Psoas muscle (tissue), 8 donors: ENCODE measurements at regions of chr12 and their contacts with region 1.

Region 1: DNA sequence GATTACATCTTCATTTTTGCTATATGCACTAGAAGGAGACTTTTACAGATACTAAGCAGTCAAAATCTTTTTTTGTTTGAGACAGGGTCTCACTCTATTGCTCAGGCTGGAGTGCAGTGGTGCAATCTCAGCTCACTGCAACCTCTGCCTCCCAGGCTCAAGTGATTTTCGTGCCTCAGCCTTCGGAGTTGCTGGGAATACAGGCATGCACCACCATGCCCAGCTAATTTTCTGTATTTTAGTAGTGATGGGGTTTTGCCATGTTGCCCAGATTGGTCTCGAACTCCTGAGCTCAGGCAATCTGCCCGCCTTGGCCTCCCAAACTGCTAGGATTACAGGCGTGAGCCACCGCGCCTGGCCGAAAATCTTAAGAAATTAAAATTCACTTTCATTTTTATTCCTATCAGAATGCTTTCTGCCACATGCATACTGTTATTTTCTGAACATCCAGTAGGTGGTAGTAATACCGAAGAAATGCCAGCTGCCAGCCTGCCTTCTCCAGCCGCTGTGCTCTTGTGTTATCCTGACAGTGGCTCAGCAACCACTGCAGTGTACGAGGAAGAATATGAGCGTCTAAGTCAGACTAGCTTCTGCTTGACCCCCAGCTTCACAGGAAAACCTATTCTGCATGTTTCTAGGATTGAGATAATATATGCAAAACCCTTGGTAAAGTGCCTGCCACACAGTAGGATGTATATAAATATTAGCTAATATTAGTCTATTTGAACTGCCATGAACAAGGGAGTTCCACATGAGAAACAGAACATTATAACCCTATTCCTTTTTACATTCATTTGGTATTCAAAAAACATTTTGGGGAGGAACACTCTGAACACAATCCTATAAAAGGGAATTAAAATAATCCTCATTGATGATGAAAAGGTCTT is 54.2 kb downstream of the RPAP3 start:
- DNase-seq: peak; percentile 30 to 62
- ATAC-seq: peak; percentile 77 to 92 (median 85)
- H3K4me3 ChIP-seq: peak overlapping the region; percentile 33
- H3K27ac ChIP-seq: no peak overlapping the region
- H3K4me1 ChIP-seq: peaks cover 5% of the 10 kb centered on the region
- H3K27me3 ChIP-seq: no peaks in the 10 kb centered on the region
- CTCF ChIP-seq: peak; percentile 74

Region 2: DNA sequence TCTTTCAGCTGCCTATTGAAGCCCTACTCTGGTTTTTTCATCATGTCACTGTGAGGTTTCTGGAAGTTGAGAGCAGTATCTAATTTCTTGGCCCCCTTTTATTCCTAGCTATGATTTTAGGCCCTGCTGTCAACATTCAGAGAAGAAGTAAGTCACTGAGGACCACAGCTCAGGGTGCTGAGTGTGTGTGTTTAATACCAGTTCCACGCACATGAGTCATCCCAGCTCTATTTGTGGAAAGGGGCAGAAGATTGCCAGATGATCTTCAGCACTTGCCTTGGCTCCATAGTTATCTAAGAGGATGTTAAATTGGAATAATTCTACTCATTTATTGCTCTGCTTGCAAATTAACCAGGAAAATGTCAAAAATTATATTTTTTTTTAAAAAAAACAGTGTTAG is 760.3 kb before region 1 on chr12:
- intact Hi-C with region 1: no loop called
- DNase-seq: no peak
- ATAC-seq: peak; percentile 80 to 91 (median 88)
- H3K4me3 ChIP-seq: no peak overlapping the region
- H3K27ac ChIP-seq: peak overlapping the region; percentile 77
- H3K4me1 ChIP-seq: peaks cover 8% of the 10 kb centered on the region
- H3K27me3 ChIP-seq: no peaks in the 10 kb centered on the region
- CTCF ChIP-seq: no peak

Region 3: DNA sequence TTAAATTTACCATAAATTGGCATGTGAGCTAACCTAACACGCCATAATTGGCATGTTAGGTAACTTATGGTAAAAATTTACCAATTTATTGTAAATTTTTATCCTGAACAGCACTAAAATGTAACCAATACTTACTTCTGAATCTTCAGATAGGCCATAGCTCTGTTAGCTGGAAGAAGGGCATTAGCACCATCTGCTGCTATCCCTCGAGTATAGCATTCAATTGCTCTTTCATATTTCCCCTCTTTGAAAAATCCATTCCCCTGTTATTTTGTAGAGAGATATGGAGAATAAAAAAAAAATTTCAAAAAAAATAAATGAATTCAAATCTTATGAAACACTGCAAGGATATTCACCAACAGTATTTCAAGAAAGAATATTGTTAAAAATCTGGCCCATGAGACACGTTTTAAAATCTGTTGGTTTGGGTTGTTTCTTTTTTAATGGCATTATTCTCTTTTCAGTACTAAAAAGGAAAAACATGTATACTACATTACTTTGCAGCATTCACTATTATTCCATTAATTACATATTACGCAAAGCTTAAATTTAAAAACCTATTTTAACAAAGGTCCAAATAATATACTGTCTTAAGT is 35.1 kb after region 1 on chr12:
- intact Hi-C with region 1: loop called in 1 of 2 experiments (anchors 5 kb)
- DNase-seq: no peak
- ATAC-seq: peak in 1 of 4 donors; percentile 49
- H3K4me3 ChIP-seq: no peak overlapping the region
- H3K27ac ChIP-seq: no peak overlapping the region
- H3K4me1 ChIP-seq: no peaks in the 10 kb centered on the region
- H3K27me3 ChIP-seq: no peaks in the 10 kb centered on the region
- CTCF ChIP-seq: peak; percentile 53

Region 4: DNA sequence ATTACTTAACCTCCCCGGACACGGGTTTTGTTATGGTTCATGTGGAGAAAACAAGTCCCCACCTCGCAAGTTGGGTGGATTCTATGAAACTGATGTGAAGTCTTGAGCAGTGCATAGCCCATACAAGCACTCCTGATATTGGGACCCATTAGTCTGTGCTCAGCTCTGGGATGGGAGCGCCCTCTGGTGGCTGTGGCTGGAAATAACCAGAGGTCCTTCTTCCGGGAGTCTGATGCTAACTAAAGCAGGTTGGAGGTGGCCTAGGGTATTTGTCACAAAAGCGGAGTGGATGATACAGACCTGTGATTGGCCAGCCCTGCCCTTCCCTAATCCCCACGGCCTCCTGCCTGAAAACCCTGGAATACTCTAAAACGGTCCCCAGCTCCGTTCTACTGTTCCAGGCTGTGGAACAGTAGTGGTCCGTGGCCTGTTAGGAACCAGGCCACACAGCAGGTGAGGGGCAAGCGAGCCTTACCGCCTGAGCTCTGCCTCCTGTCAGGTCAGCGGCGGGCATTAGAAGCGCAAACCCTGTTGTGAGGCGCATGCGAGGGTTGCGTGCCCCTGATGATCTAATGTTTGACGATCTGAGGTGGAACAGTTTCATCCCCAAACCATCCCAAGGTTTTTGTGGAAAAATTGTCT is 127.8 kb after region 1 on chr12:
- intact Hi-C with region 1: loop called in 1 of 2 experiments (anchors 5 kb)
- DNase-seq: peak; percentile 88 to 94
- ATAC-seq: peak; percentile 74 to 85 (median 80)
- H3K4me3 ChIP-seq: no peak overlapping the region
- H3K27ac ChIP-seq: no peak overlapping the region
- H3K4me1 ChIP-seq: peaks cover 46% of the 10 kb centered on the region
- H3K27me3 ChIP-seq: no peaks in the 10 kb centered on the region
- CTCF ChIP-seq: peak; percentile 97